Activated B cell treated with CpG ODN at 0.5 μM for 24 hours (primary cell): ENCODE measurements at regions of chr7 and their contacts with region 1.

Region 1: GRCh38 chr7:30284298-30285066 is at the start of gene ZNRF2:
- DNase-seq: peak; percentile 95
- ATAC-seq: peak; percentile 82
- H3K4me3 Mint-ChIP-seq: peak within 1 kb of the TSS; percentile 87
- H3K27ac Mint-ChIP-seq: peak within 1 kb of the TSS; percentile 90
- H3K4me1 Mint-ChIP-seq: peaks cover 48% of the 10 kb centered on the region
- H3K27me3 Mint-ChIP-seq: no peaks in the 10 kb centered on the region
- CTCF ChIP-seq: no peak
- total RNA-seq, gene ZNRF2: 18.7 and 21.4 TPM in 2 replicates

Region 2: DNA sequence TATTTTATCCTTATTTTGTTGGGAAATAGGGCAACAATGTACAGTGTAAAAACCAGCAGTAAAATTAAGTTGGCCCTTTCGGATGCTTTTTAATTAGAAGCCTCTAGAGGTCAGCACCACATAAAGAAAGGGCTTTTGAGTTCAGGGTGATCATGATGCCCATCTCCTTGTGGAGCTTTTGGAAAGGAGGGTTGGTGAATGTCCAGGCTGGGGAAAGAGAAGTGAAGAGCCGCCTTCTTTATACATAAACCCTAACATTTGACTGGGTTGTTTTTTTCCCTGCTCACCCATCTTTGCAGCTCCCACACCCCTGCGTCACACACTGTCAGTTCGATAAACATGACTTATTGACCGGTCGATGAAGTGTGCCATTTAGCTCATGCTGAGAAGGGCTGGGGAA is 119.9 kb before region 1 on chr7:
- CTCF ChIA-PET with region 1: interaction called, 37 read pairs
- POLR2A ChIA-PET with region 1: interaction called, 13 read pairs
- intact Hi-C with region 1: loop called (anchors 1 kb)
- DNase-seq: no peak
- ATAC-seq: peak; percentile 49
- H3K4me3 Mint-ChIP-seq: no peak overlapping the region
- H3K27ac Mint-ChIP-seq: peak overlapping the region; percentile 38
- H3K4me1 Mint-ChIP-seq: peaks cover 39% of the 10 kb centered on the region
- H3K27me3 Mint-ChIP-seq: no peaks in the 10 kb centered on the region
- CTCF ChIP-seq: no peak

Region 3: GRCh38 chr7:30238721-30239441 is 45.6 kb before region 1 on chr7:
- CTCF ChIA-PET with region 1: no interaction called
- POLR2A ChIA-PET with region 1: interaction called, 5 read pairs
- intact Hi-C with region 1: loop called (anchors 1 kb)
- DNase-seq: no peak
- ATAC-seq: peak; percentile 69
- H3K4me3 Mint-ChIP-seq: peak overlapping the region; percentile 58
- H3K27ac Mint-ChIP-seq: peak overlapping the region; percentile 88
- H3K4me1 Mint-ChIP-seq: peaks cover 48% of the 10 kb centered on the region
- H3K27me3 Mint-ChIP-seq: no peaks in the 10 kb centered on the region
- CTCF ChIP-seq: no peak

Region 4: DNA sequence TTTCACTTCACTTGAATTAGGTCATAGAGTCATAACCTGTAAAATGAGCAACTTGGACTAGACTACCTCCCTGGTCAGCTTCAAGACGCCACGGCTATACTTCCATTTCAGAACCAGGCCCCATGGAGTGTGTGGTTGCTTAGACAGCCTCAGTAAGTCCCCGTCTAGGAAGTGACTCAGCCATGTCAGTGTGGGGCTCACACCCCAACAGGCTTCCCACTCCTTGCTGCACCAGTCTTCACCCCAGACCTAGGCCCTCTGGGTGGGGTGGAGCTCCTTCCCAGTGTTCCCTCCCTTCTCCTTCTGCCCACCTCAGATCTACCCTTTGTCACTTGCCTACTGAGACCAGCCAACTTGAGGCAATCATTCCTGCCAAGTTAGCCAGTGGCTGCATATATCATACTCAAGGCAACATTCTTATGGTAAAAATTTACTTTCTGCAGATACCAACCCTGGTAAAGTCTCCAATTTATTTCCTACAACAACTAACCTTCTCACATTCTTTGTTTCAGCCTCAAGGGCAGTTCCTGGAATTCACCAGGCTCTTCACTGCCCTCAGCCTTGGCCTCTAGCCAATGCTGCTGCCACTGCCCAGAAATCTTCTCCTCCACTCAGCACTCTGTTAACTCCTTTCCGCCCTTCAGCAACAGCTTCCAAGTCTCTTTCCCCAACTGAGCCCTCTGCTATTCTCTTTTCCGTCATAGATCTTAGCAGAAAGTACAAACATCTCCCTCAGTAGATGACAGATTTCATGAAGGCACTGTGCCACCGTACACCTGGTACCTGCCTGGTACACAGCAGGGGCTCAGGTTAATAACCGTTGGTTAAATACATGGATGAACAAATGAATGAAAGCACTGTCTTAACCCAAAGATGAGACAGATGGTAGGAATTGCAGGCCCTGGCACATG is 31.3 kb before region 1 on chr7:
- CTCF ChIA-PET with region 1: no interaction called
- POLR2A ChIA-PET with region 1: no interaction called
- intact Hi-C with region 1: no loop called
- DNase-seq: no peak
- ATAC-seq: no peak
- H3K4me3 Mint-ChIP-seq: no peak overlapping the region
- H3K27ac Mint-ChIP-seq: no peak overlapping the region
- H3K4me1 Mint-ChIP-seq: peaks cover 1% of the 10 kb centered on the region
- H3K27me3 Mint-ChIP-seq: no peaks in the 10 kb centered on the region
- CTCF ChIP-seq: no peak

Region 5: GRCh38 chr7:30308389-30308788 is 23.9 kb after region 1 on chr7:
- CTCF ChIA-PET with region 1: no interaction called
- POLR2A ChIA-PET with region 1: no interaction called
- intact Hi-C with region 1: no loop called
- DNase-seq: no peak
- ATAC-seq: peak; percentile 65
- H3K4me3 Mint-ChIP-seq: no peak overlapping the region
- H3K27ac Mint-ChIP-seq: no peak overlapping the region
- H3K4me1 Mint-ChIP-seq: peaks cover 80% of the 10 kb centered on the region
- H3K27me3 Mint-ChIP-seq: no peaks in the 10 kb centered on the region
- CTCF ChIP-seq: no peak

Region 6: GRCh38 chr7:30348083-30348560 is 63.6 kb after region 1 on chr7:
- CTCF ChIA-PET with region 1: interaction called, 66 read pairs
- POLR2A ChIA-PET with region 1: interaction called, 23 read pairs
- intact Hi-C with region 1: loop called (anchors 1 kb)
- DNase-seq: no peak
- ATAC-seq: peak; percentile 83
- H3K4me3 Mint-ChIP-seq: peak overlapping the region; percentile 32
- H3K27ac Mint-ChIP-seq: peak overlapping the region; percentile 86
- H3K4me1 Mint-ChIP-seq: peaks cover 65% of the 10 kb centered on the region
- H3K27me3 Mint-ChIP-seq: no peaks in the 10 kb centered on the region
- CTCF ChIP-seq: no peak

Region 7: DNA sequence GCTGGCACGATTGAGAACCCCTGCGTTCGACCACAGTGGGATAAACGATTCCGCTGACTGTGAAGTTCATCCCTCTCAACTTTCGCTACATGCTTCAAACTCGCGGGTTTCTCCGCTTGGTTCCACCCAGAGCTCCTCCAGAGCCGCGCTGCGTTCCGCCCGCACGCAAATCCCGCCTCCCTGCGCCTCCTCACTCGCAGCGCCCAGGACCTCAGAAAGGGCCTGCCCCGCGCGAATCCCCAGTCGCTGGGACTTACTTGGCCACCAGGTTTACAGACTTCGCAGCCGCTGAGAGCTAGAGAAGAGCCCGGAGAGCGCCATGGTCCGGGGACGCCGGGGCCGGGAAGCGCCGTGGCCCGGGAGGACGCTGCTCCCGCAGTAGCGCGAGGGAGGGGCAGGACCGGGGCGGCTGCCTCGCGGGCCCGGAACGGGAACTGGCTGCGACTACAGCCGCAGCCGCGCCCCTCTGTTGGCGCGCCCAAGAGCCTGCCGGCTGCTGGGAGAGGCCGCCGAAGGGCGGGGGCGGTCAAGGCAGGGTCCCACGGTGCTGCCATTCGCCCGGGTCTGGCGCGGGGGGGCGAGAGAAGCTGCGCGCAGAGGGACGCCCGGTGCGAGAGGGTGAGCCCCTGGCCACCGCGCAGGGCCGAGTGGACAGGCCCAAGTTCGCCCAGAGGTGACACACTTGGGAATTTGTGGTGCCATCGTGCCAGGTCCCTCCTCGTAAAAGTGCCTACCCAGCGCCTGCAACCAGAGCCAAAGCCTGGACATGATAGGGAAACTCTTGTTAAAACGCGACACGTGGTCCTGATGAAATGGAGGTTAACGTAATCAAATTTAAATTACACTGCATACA is 194.1 kb after region 1 on chr7 and contains the start of gene NOD1:
- CTCF ChIA-PET with region 1: no interaction called
- POLR2A ChIA-PET with region 1: interaction called, 5 read pairs
- intact Hi-C with region 1: loop called (anchors 1 kb)
- DNase-seq: peak; percentile 70
- ATAC-seq: peak; percentile 89
- H3K4me3 Mint-ChIP-seq: peak within 1 kb of the TSS; percentile 95
- H3K27ac Mint-ChIP-seq: peak within 1 kb of the TSS; percentile 87
- H3K4me1 Mint-ChIP-seq: peaks cover 54% of the 10 kb centered on the region
- H3K27me3 Mint-ChIP-seq: no peaks in the 10 kb centered on the region
- CTCF ChIP-seq: no peak
- total RNA-seq, gene NOD1: 11.7 and 14.0 TPM in 2 replicates

Region 8: DNA sequence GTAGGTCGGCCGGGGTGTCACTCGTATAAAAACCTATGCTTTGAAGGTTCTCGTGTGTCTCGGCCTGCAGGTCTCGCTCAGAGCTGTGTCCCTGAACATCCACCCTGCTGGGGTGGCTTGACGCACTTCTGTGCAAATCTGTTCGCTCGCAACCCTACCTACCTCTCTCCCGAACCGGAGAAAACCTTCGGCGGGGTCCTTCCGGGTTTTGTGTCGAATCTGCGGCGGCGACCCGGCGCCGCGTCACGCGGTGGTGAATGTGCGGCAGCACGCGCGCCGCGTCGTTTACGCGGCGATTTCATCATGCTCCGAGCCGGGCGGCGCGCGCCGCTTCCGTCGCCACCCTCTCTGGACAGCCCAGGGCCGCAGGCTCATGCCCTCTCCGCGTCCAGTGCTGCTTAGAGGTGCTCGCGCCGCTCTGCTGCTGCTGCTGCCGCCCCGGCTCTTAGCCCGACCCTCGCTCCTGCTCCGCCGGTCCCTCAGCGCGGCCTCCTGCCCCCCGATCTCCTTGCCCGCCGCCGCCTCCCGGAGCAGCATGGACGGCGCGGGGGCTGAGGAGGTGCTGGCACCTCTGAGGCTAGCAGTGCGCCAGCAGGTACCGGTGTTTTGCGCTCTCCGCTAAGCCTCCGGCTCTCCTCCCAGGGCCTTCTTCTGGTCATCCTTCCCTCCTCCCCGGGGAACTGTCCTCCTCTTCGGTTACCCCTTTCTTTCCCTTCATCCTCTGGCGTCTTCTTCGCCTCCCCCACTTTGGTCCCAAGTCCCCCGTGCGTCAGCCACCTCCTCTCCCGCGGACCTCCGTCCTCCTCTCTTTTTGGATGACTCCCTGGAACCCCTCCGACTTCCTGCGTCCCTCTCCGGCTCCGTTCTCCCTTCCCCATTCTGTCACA is 310.3 kb after region 1 on chr7 and contains the start of gene GARS1:
- CTCF ChIA-PET with region 1: no interaction called
- POLR2A ChIA-PET with region 1: no interaction called
- intact Hi-C with region 1: loop called (anchors 1 kb)
- DNase-seq: peak; percentile 89
- ATAC-seq: peak; percentile 82
- H3K4me3 Mint-ChIP-seq: peak within 1 kb of the TSS; percentile 99
- H3K27ac Mint-ChIP-seq: peak within 1 kb of the TSS; percentile 99
- H3K4me1 Mint-ChIP-seq: peaks cover 55% of the 10 kb centered on the region
- H3K27me3 Mint-ChIP-seq: no peaks in the 10 kb centered on the region
- CTCF ChIP-seq: no peak
- total RNA-seq, gene GARS1: 197 and 214 TPM in 2 replicates

Region 9: DNA sequence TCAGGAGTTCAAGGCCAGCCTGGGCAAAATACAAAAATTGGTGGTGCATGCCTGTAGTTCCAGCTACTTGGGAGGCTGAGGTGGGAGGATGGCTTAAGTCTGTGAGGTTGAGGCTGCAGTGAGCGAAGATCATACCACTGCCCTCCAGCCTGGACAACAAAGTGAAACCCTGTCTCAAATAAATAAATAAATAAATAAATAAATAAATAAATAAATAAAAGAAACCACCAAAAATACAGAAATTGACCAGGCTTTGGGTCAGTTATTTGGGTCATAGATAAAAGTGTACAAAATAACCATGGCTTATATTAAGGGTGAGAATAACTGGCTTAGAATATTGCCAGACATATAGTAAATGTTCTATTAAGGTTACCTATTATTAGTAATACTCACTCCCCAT is 926.8 kb after region 1 on chr7:
- CTCF ChIA-PET with region 1: no interaction called
- POLR2A ChIA-PET with region 1: no interaction called
- intact Hi-C with region 1: no loop called
- DNase-seq: no peak
- ATAC-seq: no peak
- H3K4me3 Mint-ChIP-seq: no peak overlapping the region
- H3K27ac Mint-ChIP-seq: no peak overlapping the region
- H3K4me1 Mint-ChIP-seq: no peaks in the 10 kb centered on the region
- H3K27me3 Mint-ChIP-seq: no peaks in the 10 kb centered on the region
- CTCF ChIP-seq: no peak